Aorta (tissue), 5 donors: ENCODE measurements at regions of chr15 and their contacts with region 1.

Region 1: GRCh38 chr15:82540055-82540983 is at the start of gene RPS17:
- DNase-seq: peak; percentile 97 to 99
- ATAC-seq: peak; percentile 99
- H3K4me3 ChIP-seq: peak within 1 kb of the TSS; percentile 82 to 88
- H3K27ac ChIP-seq: peak within 1 kb of the TSS; percentile 34 to 71
- H3K4me1 ChIP-seq: peaks cover 0 to 3% of the 10 kb centered on the region in 2 donors
- H3K27me3 ChIP-seq: no peaks in the 10 kb centered on the region
- total RNA-seq, gene RPS17: 1,022 to 1,110 TPM

Region 2: GRCh38 chr15:82272154-82272553 is 268.2 kb before region 1 on chr15:
- intact Hi-C with region 1: no loop called
- DNase-seq: no peak
- ATAC-seq: no peak
- H3K4me3 ChIP-seq: no peak overlapping the region
- H3K27ac ChIP-seq: no peak overlapping the region
- H3K4me1 ChIP-seq: no peaks in the 10 kb centered on the region
- H3K27me3 ChIP-seq: no peaks in the 10 kb centered on the region

Region 3: GRCh38 chr15:82749951-82750830 is 209.9 kb after region 1 on chr15:
- intact Hi-C with region 1: loop called in 1 of 2 experiments (anchors 1 kb)
- DNase-seq: peak; percentile 94 to 97
- ATAC-seq: peak; percentile 96
- H3K4me3 ChIP-seq: peak overlapping the region; percentile 69
- H3K27ac ChIP-seq: peak overlapping the region; percentile 46 to 85
- H3K4me1 ChIP-seq: peaks cover 2 to 8% of the 10 kb centered on the region in 2 donors
- H3K27me3 ChIP-seq: no peaks in the 10 kb centered on the region

Region 4: GRCh38 chr15:82985688-82986441 is 445.5 kb after region 1 on chr15 and contains the start of gene RAMAC:
- intact Hi-C with region 1: loop called in 1 of 2 experiments (anchors 5 kb)
- DNase-seq: peak; percentile 95 to 96
- ATAC-seq: peak; percentile 97
- H3K4me3 ChIP-seq: peak within 1 kb of the TSS; percentile 86 to 90
- H3K27ac ChIP-seq: peak within 1 kb of the TSS in 1 of 2 donors; percentile 68
- H3K4me1 ChIP-seq: no peaks in the 10 kb centered on the region
- H3K27me3 ChIP-seq: no peaks in the 10 kb centered on the region
- total RNA-seq, gene RAMAC: 11.5 to 12.2 TPM

Region 5: DNA sequence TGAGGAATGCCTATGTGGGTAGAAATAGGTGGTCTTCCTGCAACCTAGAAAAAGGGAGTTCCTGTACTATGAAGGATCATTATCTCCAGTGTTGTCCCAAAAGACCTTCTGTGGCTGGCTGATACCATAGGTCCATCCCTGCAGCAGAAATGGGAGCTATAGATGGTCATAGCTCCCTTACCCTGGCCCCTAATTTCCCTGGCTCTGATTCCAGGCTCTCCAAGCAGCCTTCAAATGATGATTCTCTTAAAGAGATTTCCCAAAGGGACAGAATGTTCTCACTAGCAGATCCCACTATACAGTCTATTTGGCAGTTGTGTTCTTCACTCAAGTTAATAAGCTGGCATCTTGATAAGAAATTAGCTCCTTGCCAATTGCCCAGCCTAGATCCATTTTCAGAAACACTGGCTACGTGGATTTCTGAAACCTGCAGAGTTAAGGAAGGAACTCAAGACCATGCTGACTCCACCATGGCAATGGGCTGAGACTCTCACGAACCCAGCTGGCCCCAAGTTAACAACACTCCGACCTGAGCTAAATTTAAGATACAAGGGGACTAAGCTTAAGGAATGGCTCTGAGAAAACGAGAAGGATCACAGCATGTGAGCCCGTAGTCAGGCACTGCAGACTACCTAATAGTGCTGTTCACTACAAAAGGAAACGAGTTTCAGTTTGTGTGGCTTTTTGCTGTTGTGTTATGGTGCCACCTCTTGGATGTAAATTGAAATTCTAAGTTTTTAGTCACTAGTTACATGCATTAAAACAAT is 459.8 kb after region 1 on chr15:
- intact Hi-C with region 1: loop called in 1 of 2 experiments (anchors 10 kb)
- DNase-seq: no peak
- ATAC-seq: peak; percentile 77
- H3K4me3 ChIP-seq: no peak overlapping the region
- H3K27ac ChIP-seq: no peak overlapping the region
- H3K4me1 ChIP-seq: peaks cover 0 to 3% of the 10 kb centered on the region in 2 donors
- H3K27me3 ChIP-seq: no peaks in the 10 kb centered on the region

Region 6: GRCh38 chr15:83200162-83200561 is 659.8 kb after region 1 on chr15:
- intact Hi-C with region 1: loop called in 1 of 2 experiments (anchors 5 kb)
- DNase-seq: no peak
- ATAC-seq: no peak
- H3K4me3 ChIP-seq: no peak overlapping the region
- H3K27ac ChIP-seq: no peak overlapping the region
- H3K4me1 ChIP-seq: peaks cover 0 to 8% of the 10 kb centered on the region in 2 donors
- H3K27me3 ChIP-seq: no peaks in the 10 kb centered on the region